Posterior cingulate gyrus (tissue), 11 donors: ENCODE measurements at regions of chr4 and their contacts with region 1.

Region 1: GRCh38 chr4:6546681-6547447 is 28.1 kb upstream of the MAN2B2 start:
- DNase-seq: peak in 6 of 10 donors; percentile 39 to 93 (median 61)

Region 2: GRCh38 chr4:6250235-6250983 is 296.5 kb before region 1 on chr4:
- intact Hi-C with region 1: loop called (anchors 2 kb)
- DNase-seq: peak in 2 of 10 donors; percentile 75 to 82

Region 3: DNA sequence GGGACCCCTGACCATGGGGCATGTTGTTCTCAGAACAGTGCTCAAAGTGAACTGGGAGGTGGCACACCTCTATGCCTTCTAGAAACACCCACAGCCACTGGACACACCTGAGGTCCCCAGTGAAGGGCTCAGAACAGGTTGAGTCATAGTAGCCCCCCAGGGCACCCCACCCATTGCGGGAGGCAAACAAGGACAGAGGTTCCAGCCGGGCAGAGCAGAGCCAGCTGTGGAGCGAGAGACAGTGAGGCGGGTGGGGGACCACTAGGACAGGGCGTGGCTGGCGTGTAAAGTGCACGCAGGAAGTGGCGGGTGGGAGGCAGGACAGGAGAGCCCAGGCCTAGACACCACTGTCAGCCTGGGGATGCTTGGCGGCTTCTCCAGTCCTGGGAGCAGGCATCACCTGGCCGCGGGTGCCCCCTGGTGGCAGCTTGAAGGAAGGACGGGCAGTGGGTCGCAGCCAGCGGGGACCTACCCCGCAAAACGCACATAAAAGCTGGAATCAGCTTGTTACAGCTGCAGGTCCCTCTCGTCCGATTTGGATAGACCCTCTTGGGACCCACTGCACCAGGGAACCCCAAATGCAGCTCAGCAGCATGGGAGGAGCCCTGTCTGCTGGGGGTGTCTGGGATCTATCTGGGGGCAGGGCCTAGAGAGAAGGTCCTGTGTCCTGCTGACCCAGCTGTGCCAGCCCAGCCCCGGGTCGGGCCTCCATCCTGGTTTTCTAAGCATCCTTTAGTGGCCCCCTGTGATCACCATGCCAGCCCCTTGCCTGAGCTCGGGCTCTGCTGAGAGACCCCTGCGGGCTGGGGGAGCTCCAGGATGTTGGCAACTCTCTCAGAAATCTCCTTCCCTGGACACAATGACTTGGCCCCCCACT is 219.6 kb before region 1 on chr4:
- intact Hi-C with region 1: loop called (anchors 5 kb)
- DNase-seq: peak; percentile 73 to 98 (median 88)

Region 4: DNA sequence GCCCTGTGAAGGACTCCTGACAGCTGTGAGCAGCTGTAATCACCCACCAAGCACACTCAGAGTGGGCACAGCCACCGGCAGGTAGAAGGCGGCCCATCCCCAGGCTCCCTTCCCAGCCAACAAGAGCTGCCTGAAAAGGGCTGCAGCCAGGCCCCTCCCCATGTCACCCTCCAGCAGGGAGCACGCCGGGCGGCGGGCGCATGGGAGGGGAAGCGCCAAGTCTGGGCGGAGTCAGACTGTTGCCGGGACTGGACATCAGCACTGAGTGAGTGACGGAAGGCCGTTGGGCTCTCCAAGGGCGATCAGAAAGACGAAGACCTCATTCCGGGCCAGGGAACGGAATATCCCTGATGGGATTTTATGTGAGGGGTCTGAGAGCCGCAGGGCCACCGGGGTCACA is 156.5 kb before region 1 on chr4:
- intact Hi-C with region 1: loop called (anchors 5 kb)
- DNase-seq: peak in 5 of 10 donors; percentile 35 to 93 (median 78)

Region 5: GRCh38 chr4:6470502-6471306 is 76.2 kb before region 1 on chr4:
- intact Hi-C with region 1: loop called (anchors 5 kb)
- DNase-seq: peak; percentile 65 to 96 (median 75)